Astrocyte of the cerebellum (primary cell): ENCODE measurements at regions of chr1 and their contacts with region 1.

Region 1: GRCh38 chr1:247164694-247165093 is 7.1 kb downstream of the ZNF124 start:
- DNase-seq: no peak
- H3K4me3 ChIP-seq: no peak overlapping the region
- CTCF ChIP-seq: no peak

Region 2: GRCh38 chr1:247198781-247199180 is 34.1 kb after region 1 on chr1:
- in situ Hi-C with region 1: loop called (anchors 5 kb)
- DNase-seq: no peak
- H3K4me3 ChIP-seq: no peak overlapping the region
- CTCF ChIP-seq: no peak